Calu3 (cell line): ENCODE measurements at regions of chr9 and their contacts with region 1.

Region 1: GRCh38 chr9:72305102-72305546 is 59.9 kb downstream of the ZFAND5 start:
- DNase-seq: peak; percentile 84
- H3K4me3 Mint-ChIP-seq: peak overlapping the region; percentile 69
- H3K27ac Mint-ChIP-seq: peak overlapping the region; percentile 78
- H3K4me1 Mint-ChIP-seq: peaks cover 11% of the 10 kb centered on the region
- H3K27me3 Mint-ChIP-seq: no peaks in the 10 kb centered on the region
- CTCF ChIP-seq: no peak

Region 2: GRCh38 chr9:71571186-71571585 is 733.9 kb before region 1 on chr9:
- CTCF ChIA-PET with region 1: no interaction called
- intact Hi-C with region 1: no loop called
- DNase-seq: no peak
- H3K4me3 Mint-ChIP-seq: no peak overlapping the region
- H3K27ac Mint-ChIP-seq: no peak overlapping the region
- H3K4me1 Mint-ChIP-seq: peaks cover under 1% of the 10 kb centered on the region
- H3K27me3 Mint-ChIP-seq: no peaks in the 10 kb centered on the region
- CTCF ChIP-seq: no peak

Region 3: GRCh38 chr9:71878327-71879274 is 426.5 kb before region 1 on chr9:
- CTCF ChIA-PET with region 1: no interaction called
- intact Hi-C with region 1: no loop called
- DNase-seq: no peak
- H3K4me3 Mint-ChIP-seq: no peak overlapping the region
- H3K27ac Mint-ChIP-seq: no peak overlapping the region
- H3K4me1 Mint-ChIP-seq: no peaks in the 10 kb centered on the region
- H3K27me3 Mint-ChIP-seq: no peaks in the 10 kb centered on the region
- CTCF ChIP-seq: no peak

Region 4: DNA sequence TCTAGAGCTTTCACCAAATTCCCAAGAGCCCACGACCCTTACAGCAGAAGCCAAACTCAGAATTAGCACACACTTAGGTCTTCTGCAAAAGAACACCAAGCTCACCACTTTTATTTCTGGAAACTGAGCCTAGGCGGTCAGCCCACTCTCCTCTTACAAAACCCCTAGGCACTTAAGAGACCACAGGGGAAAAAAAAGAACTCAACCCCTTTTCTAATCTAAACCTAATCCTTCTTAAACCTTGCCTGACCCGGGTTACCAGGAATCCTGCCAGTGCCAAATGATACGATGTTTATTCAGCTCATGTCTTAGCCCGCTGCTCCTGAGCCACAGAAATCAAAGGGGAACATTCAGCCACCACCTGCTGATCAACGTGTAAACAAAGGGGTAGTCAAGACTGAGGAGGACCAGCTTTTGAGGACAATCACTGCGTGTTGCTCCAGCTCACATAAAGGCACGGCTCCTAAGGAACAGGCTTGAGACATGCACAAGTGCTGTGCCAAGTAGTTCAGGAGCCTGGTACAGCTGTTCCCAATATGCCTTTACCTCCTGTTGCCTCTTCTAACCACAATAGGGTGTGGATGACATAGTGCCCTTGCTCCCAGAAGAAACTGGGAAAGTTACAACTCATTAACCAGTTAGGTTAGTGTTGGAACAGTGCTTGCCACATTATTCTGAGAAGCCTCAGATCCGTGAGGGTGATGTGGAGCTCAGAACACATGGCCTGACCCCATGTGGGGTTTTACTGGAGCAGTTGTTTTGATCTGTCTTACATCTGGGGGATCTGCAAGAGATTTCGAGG is 10.6 kb after region 1 on chr9:
- CTCF ChIA-PET with region 1: interaction called, 11 read pairs
- intact Hi-C with region 1: no loop called
- DNase-seq: peak; percentile 58
- H3K4me3 Mint-ChIP-seq: peak overlapping the region; percentile 50
- H3K27ac Mint-ChIP-seq: peak overlapping the region; percentile 85
- H3K4me1 Mint-ChIP-seq: peaks cover 29% of the 10 kb centered on the region
- H3K27me3 Mint-ChIP-seq: no peaks in the 10 kb centered on the region
- CTCF ChIP-seq: no peak